HEK293 (cell line): ENCODE measurements at regions of chr16 and their contacts with region 1.

Region 1: DNA sequence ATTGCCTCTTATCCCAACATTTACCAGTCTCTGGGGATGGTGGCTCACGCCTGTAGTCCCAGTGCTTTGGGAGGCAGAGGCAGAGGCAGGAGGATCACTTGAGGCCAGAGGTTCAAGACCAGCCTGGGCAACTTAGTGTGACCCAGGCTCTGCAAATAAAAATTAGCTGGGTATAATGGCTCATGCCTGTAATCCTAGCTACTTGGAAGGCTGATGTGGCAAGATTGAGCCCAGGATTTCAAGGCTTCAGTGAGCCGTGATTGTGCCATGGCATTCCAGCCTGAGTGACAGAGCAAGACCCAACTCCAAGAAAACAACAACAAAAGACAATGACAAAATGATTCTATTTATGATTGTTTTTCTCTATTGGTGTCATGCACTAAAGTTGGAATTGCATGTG is 244.9 kb downstream of the RBFOX1 start:
- H3K4me3 ChIP-seq: no peak overlapping the region
- H3K27ac ChIP-seq: no peak overlapping the region
- H3K4me1 ChIP-seq: no peaks in the 10 kb centered on the region
- CTCF ChIP-seq: no peak

Region 2: DNA sequence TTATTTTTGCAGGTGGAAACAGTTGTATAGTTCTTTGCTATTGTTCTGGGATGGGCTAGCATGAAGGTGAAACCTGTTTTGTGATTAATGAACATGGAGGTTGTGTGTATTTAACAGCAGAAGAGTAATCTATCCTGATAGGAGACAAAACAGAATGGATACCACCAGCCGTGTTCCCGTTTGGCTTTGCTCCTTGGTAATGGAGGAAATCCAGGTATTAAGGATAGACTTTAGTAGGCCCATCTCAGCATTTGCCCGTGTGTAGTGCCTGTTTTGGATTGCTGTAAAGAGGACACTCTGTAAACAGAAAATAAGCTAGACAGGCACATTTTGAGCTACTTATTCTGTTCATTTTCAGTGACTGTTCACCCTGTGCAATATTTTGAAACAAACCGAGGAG is 29.9 kb before region 1 on chr16:
- CTCF ChIA-PET with region 1: interaction called, 10 read pairs
- POLR2A ChIA-PET with region 1: no interaction called
- H3K4me3 ChIP-seq: no peak overlapping the region
- H3K27ac ChIP-seq: no peak overlapping the region
- H3K4me1 ChIP-seq: no peaks in the 10 kb centered on the region
- CTCF ChIP-seq: no peak